Activated B cell treated with CpG ODN at 0.5 μM for 24 hours (primary cell): ENCODE measurements at regions of chr12 and their contacts with region 1.

Region 1: DNA sequence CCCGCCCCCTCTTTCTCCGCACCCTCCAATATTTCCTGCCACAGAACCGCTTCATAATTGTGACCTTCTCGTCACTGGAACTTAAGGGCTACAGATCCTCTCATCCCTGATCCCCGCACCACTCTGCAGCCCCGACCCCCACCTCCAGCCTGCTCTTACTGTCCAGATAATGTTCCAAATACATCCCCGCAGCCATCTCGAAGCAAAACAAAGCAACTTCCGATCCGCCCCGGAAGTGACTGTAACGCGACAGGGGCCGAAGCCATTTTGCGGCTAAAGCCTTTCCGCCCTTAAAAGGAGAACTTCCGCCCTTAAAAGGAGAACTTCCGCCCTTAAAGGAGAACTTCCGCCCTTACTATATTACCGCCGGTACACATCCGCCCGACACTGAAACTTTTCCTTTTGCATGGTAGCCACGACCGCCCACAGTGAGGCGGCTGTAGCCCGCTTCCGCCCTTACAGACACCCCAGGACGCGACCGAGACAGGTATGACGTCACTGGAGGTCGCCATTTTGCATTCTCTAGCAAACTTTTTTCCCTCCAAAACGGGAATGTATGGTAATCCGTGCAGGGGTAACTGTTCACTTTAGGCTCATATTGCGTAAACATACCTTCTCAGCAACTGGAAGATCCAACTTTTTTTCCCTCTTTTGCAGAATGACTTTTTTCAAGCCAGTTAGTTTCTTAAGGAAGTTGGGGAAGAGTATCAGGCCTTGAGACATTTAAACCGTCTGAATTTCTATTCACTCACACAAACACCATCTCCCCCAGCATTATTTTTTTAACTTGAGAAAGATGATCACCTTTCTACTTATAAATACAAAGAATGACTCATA is at the start of gene ING4:
- DNase-seq: peak; percentile 80
- ATAC-seq: peak; percentile 97
- H3K4me3 Mint-ChIP-seq: peak within 1 kb of the TSS; percentile 97
- H3K27ac Mint-ChIP-seq: peak within 1 kb of the TSS; percentile 95
- H3K4me1 Mint-ChIP-seq: peaks cover 27% of the 10 kb centered on the region
- H3K27me3 Mint-ChIP-seq: no peaks in the 10 kb centered on the region
- CTCF ChIP-seq: no peak
- total RNA-seq, gene ING4: 31.6 and 39.2 TPM in 2 replicates

Region 2: DNA sequence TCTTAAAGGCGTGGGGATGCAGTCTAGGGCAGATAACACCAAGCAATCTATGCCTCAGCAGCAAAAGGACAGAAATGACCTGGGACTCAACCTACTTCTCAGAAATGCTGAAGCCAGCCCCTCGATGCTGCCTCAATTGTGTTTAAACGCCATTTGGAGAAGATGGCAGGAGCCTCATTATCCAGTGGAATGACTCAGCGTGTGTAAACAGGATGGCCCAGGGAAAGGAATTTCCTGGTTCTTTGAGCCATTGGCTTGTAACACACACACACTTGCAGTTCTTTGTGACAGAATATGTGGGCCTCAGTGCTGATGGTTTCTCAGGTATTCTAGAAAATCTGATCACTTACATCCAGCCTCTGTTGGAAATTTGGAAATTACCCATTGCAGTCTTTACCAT is 1076.9 kb before region 1 on chr12:
- CTCF ChIA-PET with region 1: no interaction called
- POLR2A ChIA-PET with region 1: no interaction called
- intact Hi-C with region 1: no loop called
- DNase-seq: no peak
- ATAC-seq: no peak
- H3K4me3 Mint-ChIP-seq: no peak overlapping the region
- H3K27ac Mint-ChIP-seq: no peak overlapping the region
- H3K4me1 Mint-ChIP-seq: no peaks in the 10 kb centered on the region
- H3K27me3 Mint-ChIP-seq: peaks cover 9% of the 10 kb centered on the region
- CTCF ChIP-seq: no peak

Region 3: GRCh38 chr12:6563448-6564050 is 99.6 kb before region 1 on chr12:
- CTCF ChIA-PET with region 1: no interaction called
- POLR2A ChIA-PET with region 1: interaction called, 4 read pairs
- intact Hi-C with region 1: loop called (anchors 1 kb)
- DNase-seq: peak; percentile 57
- ATAC-seq: peak; percentile 25
- H3K4me3 Mint-ChIP-seq: no peak overlapping the region
- H3K27ac Mint-ChIP-seq: no peak overlapping the region
- H3K4me1 Mint-ChIP-seq: peaks cover 29% of the 10 kb centered on the region
- H3K27me3 Mint-ChIP-seq: no peaks in the 10 kb centered on the region
- CTCF ChIP-seq: peak; percentile 57

Region 4: GRCh38 chr12:6647083-6647604 is 16.0 kb before region 1 on chr12 and contains the start of gene ACRBP:
- CTCF ChIA-PET with region 1: no interaction called
- POLR2A ChIA-PET with region 1: interaction called, 4 read pairs
- intact Hi-C with region 1: loop called (anchors 2 kb)
- DNase-seq: peak; percentile 71
- ATAC-seq: peak; percentile 83
- H3K4me3 Mint-ChIP-seq: peak within 1 kb of the TSS; percentile 84
- H3K27ac Mint-ChIP-seq: peak within 1 kb of the TSS; percentile 74
- H3K4me1 Mint-ChIP-seq: peaks cover 39% of the 10 kb centered on the region
- H3K27me3 Mint-ChIP-seq: no peaks in the 10 kb centered on the region
- CTCF ChIP-seq: no peak
- total RNA-seq, gene ACRBP: 5.4 and 7.7 TPM in 2 replicates